Activated CD4-positive, alpha-beta memory T cell treated with anti-CD3 and anti-CD28 coated beads, Interleukin-2, amount 10 ng/mL, durations not matched to agents 7 days and 5 days (primary cell): ENCODE measurements at regions of chr1 and their contacts with region 1.

Region 1: DNA sequence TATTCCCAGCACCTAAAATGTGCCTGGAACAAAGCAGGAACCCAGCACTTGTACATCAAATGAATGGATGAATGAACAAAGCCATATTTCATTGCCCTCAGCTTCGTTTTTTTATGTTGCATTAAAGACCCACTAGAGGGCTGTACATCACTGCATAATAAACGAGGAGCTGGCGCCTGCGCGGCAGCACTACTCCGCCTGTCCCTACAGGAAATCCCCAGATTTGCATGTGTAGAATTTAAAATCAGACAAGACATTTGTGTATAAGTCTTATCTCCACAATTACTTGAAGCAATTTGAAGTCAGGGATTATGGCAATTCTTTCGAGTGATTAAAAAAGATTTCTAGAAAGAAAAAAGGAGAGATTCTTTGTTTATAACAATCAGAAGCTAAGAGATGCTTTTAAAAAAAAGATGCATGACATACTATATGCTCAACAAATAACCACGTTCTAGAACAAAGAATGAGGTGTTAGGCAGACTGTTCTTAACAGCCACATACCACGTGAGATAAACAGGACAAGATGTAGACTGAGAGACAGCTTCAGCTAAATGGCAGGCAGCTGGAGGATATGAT is 5.4 kb upstream of the NEK2 start:
- DNase-seq: peak; percentile 76
- H3K4me3 Mint-ChIP-seq: no peak overlapping the region
- H3K27ac Mint-ChIP-seq: peak overlapping the region; percentile 58
- H3K4me1 Mint-ChIP-seq: peaks cover 15% of the 10 kb centered on the region
- H3K27me3 Mint-ChIP-seq: peaks cover 2% of the 10 kb centered on the region

Region 2: DNA sequence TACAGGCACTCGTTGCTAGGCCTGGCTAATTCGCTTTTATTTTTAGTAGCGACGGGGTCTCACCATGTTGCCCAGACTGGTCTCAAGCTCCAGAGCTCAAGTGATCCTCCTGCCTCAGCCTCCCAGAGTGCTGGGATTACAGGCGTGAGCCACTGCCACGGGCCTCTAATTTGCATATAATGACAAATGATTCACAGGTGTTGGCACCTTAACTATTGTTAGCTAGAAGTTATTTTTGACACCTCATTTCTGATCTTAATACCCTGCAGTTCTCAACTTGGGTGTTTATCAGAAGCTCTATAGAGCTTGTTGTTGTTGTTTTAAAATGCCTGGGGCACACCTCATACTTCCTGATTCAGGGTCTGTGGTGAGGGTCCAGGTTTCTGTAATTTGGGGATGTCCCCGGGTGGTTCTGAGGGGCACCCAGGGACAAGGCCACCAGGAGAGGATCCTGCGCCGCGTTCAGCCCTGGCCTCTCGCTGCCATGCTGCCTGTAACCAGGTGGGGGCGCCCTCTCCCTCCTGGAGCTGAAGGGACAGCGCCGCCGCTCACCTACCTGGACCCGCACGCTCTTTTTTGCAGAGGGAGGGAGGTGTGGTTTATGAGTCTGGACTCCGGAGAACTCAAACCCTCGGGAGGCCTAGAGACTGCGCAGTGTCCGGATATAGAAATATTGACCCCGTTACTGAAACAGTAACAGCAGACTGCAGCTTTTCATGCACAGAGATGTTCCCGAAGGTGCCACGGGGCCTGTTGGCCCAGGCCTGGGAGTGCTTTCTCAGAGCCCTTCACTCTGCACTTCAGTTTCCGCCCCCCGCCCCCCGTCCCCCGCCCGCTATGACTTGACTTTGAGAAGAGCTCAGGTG is 17.6 kb after region 1 on chr1:
- CTCF ChIA-PET with region 1: interaction called, 120 read pairs
- POLR2A ChIA-PET with region 1: interaction called, 6 read pairs
- DNase-seq: peak; percentile 85
- H3K4me3 Mint-ChIP-seq: peak overlapping the region; percentile 52
- H3K27ac Mint-ChIP-seq: no peak overlapping the region
- H3K4me1 Mint-ChIP-seq: peaks cover 46% of the 10 kb centered on the region
- H3K27me3 Mint-ChIP-seq: peaks cover 20% of the 10 kb centered on the region

Region 3: GRCh38 chr1:212012034-212012740 is 331.3 kb after region 1 on chr1:
- CTCF ChIA-PET with region 1: interaction called, 13 read pairs
- POLR2A ChIA-PET with region 1: no interaction called
- DNase-seq: peak; percentile 72
- H3K4me3 Mint-ChIP-seq: no peak overlapping the region
- H3K27ac Mint-ChIP-seq: no peak overlapping the region
- H3K4me1 Mint-ChIP-seq: no peaks in the 10 kb centered on the region
- H3K27me3 Mint-ChIP-seq: no peaks in the 10 kb centered on the region

Region 4: DNA sequence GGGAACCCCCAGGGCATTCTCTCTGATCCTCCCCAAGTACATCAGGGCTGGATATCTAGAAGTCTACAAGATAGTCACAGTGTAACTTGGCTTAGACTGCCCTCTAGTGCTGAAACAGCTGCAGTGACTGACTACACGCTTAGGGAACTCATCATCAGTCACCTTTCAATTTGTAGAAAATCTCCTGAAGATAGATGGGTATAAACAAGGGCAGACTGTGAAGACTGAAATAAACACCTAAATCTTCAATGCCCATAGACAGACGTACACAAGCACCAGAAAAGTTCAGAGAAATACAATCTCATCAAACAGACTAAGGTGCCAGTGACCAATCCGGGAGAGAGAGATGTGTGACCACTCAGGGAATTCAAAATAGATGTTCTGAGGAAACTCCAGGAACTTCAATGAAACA is 687.2 kb after region 1 on chr1:
- CTCF ChIA-PET with region 1: interaction called, 12 read pairs
- POLR2A ChIA-PET with region 1: no interaction called
- DNase-seq: peak; percentile 65
- H3K4me3 Mint-ChIP-seq: no peak overlapping the region
- H3K27ac Mint-ChIP-seq: no peak overlapping the region
- H3K4me1 Mint-ChIP-seq: peaks cover 2% of the 10 kb centered on the region
- H3K27me3 Mint-ChIP-seq: no peaks in the 10 kb centered on the region